ENCODE measurements at regions of chr5 and their contacts with region 1.

Region 1: DNA sequence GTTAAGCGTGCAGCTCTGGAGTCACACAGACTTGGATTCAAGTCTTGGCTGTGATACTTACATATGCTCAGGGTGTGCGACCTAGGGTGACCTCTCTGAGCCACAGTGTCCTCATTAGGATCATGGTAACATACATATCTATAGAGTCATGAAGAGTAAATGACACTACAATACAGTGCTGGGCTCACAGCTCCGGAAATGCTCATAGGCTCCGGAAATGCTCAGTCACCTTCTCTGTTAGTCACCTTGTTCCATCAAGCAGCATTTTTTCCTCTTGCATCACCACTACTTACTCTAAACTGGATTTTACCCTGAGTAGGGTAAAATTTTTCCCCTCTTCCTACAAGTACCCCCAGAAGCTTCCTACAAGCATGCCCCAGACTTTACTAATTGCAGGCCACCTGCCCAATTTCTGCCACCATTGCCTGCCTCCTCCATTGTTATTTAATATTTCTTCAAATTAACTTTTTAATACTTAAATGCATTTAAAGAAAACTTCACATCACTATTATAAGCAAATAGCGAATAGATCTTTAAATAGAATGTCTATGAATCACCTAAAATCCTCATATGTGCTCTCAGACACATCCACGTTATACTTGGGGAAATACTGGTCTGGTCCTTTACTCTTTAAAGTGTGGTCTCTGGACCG is 147.6 kb upstream of the SPRY4 start:
- DNase-seq: peak; percentile 84
- H3K4me3 Mint-ChIP-seq: peak overlapping the region; percentile 27
- H3K27ac Mint-ChIP-seq: peak overlapping the region; percentile 85
- H3K4me1 Mint-ChIP-seq: peaks cover 22% of the 10 kb centered on the region
- H3K27me3 Mint-ChIP-seq: no peaks in the 10 kb centered on the region

Region 2: DNA sequence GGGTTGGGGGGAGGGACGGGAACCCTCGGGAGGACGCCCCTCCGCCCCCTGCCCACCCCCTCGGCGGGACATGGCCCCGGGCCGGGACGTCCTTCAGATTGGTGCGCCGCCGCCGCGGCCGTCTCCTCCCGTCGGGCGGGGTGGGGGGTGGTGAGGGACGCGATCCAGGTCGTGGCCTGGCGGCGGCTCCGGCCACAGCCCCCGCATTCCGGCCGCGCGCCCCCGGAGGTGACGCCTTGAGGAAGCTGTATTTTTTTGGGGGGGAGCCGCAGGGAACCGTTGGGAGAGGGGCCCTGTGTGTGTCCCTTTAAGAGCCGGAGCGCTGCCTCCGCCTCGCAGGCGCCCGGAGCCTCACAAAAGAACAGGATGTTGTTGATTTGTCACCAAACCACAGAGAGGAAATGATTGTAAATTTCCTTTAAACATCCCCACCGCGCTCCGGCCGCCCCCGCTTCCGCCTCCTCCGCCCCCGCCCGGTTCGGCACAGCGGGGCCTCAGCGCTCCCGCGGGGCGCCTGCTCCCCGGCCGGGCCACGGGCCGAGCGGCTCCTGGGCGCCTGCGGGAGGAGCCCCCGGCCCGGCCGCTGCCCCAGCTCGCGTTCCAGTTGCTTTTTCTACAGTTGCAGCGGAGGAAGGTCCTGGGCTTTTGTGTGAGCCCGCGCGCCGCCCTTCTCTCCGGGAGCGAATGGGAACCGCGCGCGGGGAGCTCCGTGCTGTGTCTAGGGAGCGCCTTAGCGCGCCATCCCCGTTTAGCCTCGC is 115.5 kb before region 1 on chr5:
- CTCF ChIA-PET with region 1: no interaction called
- POLR2A ChIA-PET with region 1: interaction called, 3 read pairs
- intact Hi-C with region 1: loop called (anchors 2 kb)
- DNase-seq: peak; percentile 95
- H3K4me3 Mint-ChIP-seq: peak overlapping the region; percentile 71
- H3K27ac Mint-ChIP-seq: peak overlapping the region; percentile 91
- H3K4me1 Mint-ChIP-seq: peaks cover 38% of the 10 kb centered on the region
- H3K27me3 Mint-ChIP-seq: no peaks in the 10 kb centered on the region

Region 3: GRCh38 chr5:142420561-142421227 is 51.7 kb before region 1 on chr5:
- CTCF ChIA-PET with region 1: no interaction called
- POLR2A ChIA-PET with region 1: no interaction called
- intact Hi-C with region 1: loop called (anchors 2 kb)
- DNase-seq: no peak
- H3K4me3 Mint-ChIP-seq: no peak overlapping the region
- H3K27ac Mint-ChIP-seq: no peak overlapping the region
- H3K4me1 Mint-ChIP-seq: peaks cover 30% of the 10 kb centered on the region
- H3K27me3 Mint-ChIP-seq: no peaks in the 10 kb centered on the region